ENCODE measurements at regions of chr20 and their contacts with region 1.

Region 1: DNA sequence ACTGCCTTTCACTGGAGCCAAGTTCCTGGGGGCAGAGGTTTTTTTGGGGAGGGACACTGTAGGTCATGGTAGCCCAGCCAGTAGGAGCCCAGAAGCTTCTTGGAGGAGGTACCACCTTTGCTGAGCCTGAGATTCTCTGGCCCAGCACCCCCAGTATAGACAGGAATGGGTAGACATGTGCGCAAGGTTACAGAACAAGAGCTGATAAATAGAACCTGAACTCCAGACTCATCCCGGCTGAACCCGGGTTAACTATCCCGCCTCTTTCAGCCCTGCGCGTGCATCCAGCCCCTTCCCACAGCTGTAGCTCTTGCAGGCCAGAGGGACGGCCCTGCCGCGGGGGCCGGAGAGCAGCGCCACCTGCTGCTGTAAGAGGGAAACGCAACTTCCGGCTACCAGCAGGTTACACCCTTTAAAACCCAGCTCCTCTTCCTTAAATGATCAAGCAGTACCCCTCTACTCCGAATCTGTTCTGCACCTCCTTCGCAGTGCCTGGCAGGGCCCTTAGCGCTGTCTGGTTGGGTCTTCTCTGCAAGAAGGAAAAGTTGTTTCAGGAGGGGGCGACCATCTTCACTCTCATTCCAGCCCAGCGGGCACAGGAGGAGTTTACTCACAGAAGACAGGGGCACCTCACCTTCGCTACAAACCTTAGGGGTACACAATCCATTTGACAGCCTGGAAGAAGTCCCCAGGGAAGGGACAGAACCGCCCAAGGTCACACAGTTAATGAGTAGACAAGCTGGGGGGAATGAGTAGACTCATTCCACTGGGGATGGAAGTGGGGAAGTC is 7.5 kb downstream of the SRXN1 start:
- H3K4me3 ChIP-seq: no peak overlapping the region
- H3K27ac ChIP-seq: no peak overlapping the region
- H3K4me1 ChIP-seq: no peaks in the 10 kb centered on the region
- CTCF ChIP-seq: peak; percentile 96

Region 2: GRCh38 chr20:454946-455345 is 190.6 kb before region 1 on chr20:
- CTCF ChIA-PET with region 1: no interaction called
- POLR2A ChIA-PET with region 1: no interaction called
- H3K4me3 ChIP-seq: no peak overlapping the region
- H3K27ac ChIP-seq: no peak overlapping the region
- H3K4me1 ChIP-seq: peaks cover 4% of the 10 kb centered on the region
- CTCF ChIP-seq: no peak

Region 3: GRCh38 chr20:555933-556526 is 89.5 kb before region 1 on chr20:
- CTCF ChIA-PET with region 1: interaction called, 130 read pairs
- POLR2A ChIA-PET with region 1: no interaction called
- H3K4me3 ChIP-seq: no peak overlapping the region
- H3K27ac ChIP-seq: no peak overlapping the region
- H3K4me1 ChIP-seq: peaks cover 6% of the 10 kb centered on the region
- CTCF ChIP-seq: no peak

Region 4: DNA sequence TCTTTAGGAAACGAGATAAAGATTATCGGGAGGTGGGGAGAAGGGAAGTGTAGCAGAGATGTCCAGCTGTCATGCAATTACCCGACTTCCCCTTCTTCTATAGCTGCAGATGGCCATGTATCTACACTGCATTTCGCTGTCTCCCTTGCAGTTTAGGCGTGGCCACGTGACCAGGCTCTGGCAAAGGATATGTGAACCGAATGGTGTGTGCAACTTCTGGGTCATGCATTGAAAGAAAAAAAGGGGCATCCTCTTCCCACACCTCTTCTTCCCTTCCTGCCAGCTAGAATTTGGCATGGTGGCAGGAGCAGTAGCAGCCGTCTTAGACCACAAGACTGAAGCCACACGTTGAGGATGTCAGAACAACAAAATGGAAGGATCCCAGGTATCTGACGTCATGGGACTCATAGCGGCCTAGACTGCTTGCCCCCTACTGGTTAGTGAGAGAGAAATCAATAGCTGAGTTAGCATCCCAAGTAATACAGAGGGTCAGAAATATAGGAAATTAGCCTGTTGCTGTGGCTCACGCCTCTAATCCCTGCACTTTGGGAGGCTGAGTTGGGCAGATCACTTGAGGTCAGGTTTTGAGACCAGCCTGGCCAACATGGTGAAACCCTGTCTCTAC is 68.2 kb before region 1 on chr20:
- CTCF ChIA-PET with region 1: interaction called, 21 read pairs
- POLR2A ChIA-PET with region 1: no interaction called
- H3K4me3 ChIP-seq: no peak overlapping the region
- H3K27ac ChIP-seq: no peak overlapping the region
- H3K4me1 ChIP-seq: no peaks in the 10 kb centered on the region
- CTCF ChIP-seq: no peak

Region 5: GRCh38 chr20:621125-621756 is 24.3 kb before region 1 on chr20:
- CTCF ChIA-PET with region 1: interaction called, 17 read pairs
- POLR2A ChIA-PET with region 1: no interaction called
- H3K4me3 ChIP-seq: no peak overlapping the region
- H3K27ac ChIP-seq: no peak overlapping the region
- H3K4me1 ChIP-seq: peaks cover 2% of the 10 kb centered on the region
- CTCF ChIP-seq: no peak

Region 6: DNA sequence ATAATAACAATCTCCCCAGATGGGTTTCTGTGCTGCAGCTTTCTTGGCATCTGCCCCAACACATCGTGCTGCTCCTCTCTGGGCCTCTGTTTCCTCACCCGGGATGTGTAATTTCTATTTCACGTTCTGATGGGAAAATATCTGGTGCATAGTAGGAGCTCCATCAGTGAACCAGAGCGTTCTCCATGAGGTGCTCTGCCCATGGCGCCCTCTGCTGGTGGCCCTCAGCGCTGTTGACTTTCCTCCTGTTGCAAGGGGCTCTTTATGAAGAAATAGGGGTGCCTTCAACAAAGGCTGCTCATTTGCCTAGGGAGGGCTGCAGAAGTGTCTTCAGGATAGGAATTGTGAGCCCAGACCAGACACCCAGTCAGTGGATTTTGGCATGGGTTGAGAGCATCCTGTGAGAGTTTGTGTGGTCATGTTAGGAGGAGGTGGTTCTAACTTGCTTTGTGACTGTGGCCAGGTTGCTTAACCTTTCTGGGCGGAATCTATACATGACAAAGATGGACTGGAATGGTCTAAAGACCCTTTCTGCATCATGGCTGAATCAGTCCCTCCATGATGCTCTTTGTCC is 22.0 kb after region 1 on chr20:
- CTCF ChIA-PET with region 1: interaction called, 23 read pairs
- POLR2A ChIA-PET with region 1: no interaction called
- H3K4me3 ChIP-seq: no peak overlapping the region
- H3K27ac ChIP-seq: no peak overlapping the region
- H3K4me1 ChIP-seq: no peaks in the 10 kb centered on the region
- CTCF ChIP-seq: peak; percentile 54; the same call in 1 of the 2 replicates

Region 7: DNA sequence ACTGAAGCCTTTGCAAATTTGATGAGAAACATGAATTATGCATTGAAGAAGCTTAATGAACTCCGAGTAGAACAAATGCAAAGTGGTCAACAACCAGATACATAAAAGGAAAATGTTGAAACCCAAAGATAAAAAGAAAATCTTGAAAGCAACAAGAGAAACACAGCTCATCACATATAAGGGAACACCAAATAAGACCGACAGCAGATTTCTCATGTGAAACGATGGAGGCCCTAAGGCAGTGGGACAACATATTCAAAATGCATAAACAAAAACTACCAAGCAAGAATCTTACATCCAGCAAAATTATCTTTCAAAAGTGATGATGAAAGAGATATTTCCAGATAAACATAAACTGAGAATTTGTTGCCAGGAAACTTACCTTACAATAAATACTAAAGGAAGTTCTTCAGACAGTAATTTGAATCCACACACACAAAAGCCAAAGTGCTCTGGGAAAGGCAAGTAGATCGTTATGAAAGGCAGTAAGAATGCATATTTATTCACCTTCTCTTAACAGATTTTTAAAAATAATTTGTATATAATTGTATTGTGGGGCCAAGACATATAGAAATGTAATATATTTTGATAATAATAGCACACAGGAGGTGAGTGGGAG is 100.3 kb after region 1 on chr20:
- CTCF ChIA-PET with region 1: no interaction called
- POLR2A ChIA-PET with region 1: no interaction called
- H3K4me3 ChIP-seq: no peak overlapping the region
- H3K27ac ChIP-seq: no peak overlapping the region
- H3K4me1 ChIP-seq: no peaks in the 10 kb centered on the region
- CTCF ChIP-seq: no peak